ENCODE measurements at regions of chr17 and their contacts with region 1.

Region 1: DNA sequence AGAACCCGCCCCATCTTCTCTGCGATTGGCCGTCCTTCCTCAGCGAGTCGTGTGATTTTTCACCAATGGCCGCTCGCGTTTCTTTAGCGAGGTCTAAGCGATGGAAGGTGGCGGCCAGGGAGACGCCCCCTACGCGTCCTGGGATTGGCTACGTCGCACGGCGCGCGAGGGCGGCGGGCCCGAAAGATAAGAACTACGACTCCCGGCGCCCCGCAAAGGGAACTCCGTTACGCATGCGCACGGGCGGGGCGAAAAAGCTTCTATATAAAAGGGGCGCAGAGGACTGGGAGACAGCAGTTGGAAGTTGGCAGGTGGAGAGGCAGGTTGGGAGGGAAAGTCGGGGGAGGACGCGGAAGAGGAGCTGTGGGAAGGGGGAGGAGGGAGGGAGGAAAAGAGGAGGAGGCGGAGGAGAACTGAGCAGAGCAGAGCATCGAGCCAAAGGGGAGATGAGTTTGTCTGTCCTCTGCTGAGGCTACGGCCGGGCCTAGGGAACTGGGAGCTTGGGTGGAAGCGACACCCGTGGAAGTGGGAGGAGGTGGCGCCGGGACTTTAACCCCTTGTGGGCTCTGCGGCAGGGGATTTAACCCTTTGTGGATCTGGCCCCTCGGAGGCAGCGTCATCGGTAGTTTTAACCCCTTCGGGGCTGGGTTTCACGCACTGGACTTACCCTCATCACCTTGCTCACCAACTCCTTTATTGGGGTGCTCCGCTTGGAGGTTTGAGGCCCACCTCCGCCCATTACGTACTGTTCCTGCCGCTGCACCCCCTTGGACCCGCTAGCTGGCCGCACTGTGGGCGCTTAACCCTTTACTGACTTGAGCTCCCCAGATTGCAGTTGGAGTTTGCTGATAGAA is at the start of gene HEXIM1:
- DNase-seq: peak; percentile 98
- H3K27ac ChIP-seq: peak within 1 kb of the TSS; percentile 95
- CTCF ChIP-seq: no peak

Region 2: GRCh38 chr17:45108595-45109521 is 39.6 kb before region 1 on chr17:
- CTCF ChIA-PET with region 1: no interaction called
- POLR2A ChIA-PET with region 1: no interaction called
- DNase-seq: no peak
- H3K27ac ChIP-seq: peak overlapping the region; percentile 81
- CTCF ChIP-seq: 0 out of 2 replicates have a peak, but pooled peaks have one; percentile 9

Region 3: GRCh38 chr17:45161019-45161825 is 12.8 kb after region 1 on chr17:
- CTCF ChIA-PET with region 1: interaction called, 30 read pairs
- POLR2A ChIA-PET with region 1: interaction called, 22 read pairs
- DNase-seq: peak; percentile 97
- H3K27ac ChIP-seq: peak overlapping the region; percentile 95
- CTCF ChIP-seq: no peak

Region 4: GRCh38 chr17:45172454-45173286 is 24.3 kb after region 1 on chr17:
- CTCF ChIA-PET with region 1: interaction called, 25 read pairs
- POLR2A ChIA-PET with region 1: interaction called, 51 read pairs
- DNase-seq: peak; percentile 89
- H3K27ac ChIP-seq: peak overlapping the region; percentile 100
- CTCF ChIP-seq: no peak

Region 5: GRCh38 chr17:45197555-45198334 is 49.3 kb after region 1 on chr17:
- CTCF ChIA-PET with region 1: interaction called, 99 read pairs
- POLR2A ChIA-PET with region 1: interaction called, 39 read pairs
- DNase-seq: peak; percentile 86
- H3K27ac ChIP-seq: peak overlapping the region; percentile 69
- CTCF ChIP-seq: peak; percentile 99

Measured in RWPE1 (cell line).